WTC11 (cell line): ENCODE measurements at regions of chr6 and their contacts with region 1.

Region 1: DNA sequence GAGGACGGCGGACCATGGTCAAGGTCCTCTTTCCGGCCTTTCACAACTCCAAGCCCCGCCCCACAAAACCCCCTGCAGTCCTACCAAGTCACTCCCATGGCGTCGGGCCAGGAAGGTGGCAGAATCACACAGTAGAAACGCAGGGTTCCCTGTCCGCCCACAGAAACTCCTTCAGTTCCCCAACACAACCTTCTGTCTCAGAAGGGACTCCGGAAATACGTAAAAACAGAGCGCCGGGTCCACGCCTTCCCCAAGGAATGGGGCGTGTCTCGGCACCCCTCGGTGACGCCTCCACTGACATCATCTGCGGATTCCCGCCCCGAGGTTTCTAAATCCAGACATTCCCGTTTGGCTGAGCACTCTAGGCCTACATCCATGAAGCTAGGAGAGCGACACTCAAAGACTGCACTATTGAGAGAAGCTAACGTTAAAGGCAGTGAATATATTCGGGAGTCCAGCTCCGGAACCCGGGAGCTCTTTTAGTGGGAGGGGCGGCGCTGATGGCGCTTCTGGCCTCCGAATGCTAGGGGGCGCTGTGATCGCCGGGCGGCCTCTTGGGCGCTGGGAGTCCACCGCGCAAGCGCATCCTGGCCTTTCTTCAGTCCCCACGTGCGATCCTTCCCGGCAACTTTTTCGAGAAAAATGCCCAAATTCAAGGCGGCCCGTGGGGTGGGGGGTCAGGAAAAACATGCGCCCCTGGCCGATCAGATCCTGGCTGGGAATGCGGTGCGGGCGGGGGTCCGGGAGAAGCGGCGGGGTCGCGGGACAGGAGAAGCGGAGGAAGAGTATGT is at the starts of genes BYSL and MED20:
- DNase-seq: peak; percentile 92
- ATAC-seq: peak; percentile 83
- H3K4me3 Mint-ChIP-seq: peak within 1 kb of the TSS; percentile 98
- H3K27ac Mint-ChIP-seq: peak within 1 kb of the TSS; percentile 100
- H3K4me1 Mint-ChIP-seq: peaks cover 23% of the 10 kb centered on the region
- H3K27me3 Mint-ChIP-seq: no peaks in the 10 kb centered on the region
- CTCF ChIP-seq: peak; percentile 91
- total RNA-seq, gene BYSL: 40.3 to 50.8 TPM (median 43.8 TPM) in 3 replicates
- total RNA-seq, gene MED20: 37.5 to 42.4 TPM (median 38.9 TPM) in 3 replicates

Region 2: DNA sequence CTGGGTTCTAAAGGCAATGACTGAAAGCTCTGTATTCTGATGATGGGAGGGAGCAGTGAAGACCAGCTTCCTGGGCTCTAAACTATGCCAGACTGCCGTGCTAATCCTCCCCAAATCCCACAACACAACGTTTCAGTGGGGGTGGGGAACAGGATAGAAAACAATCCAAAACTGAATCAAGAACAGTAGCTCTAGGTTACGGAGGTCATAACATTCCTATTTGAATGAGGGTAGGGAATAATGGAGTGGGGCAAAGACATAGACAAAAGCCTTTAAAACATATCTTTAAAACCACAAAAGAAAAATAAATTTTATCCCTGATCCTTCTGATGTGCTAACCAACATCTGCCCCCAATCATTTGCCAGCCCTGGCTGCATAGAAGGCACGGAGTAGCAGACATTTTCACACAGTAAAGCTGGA is 33.8 kb before region 1 on chr6:
- CTCF ChIA-PET with region 1: interaction called, 12 read pairs
- POLR2A ChIA-PET with region 1: interaction called, 7 read pairs
- DNase-seq: no peak
- ATAC-seq: peak; percentile 64
- H3K4me3 Mint-ChIP-seq: no peak overlapping the region
- H3K27ac Mint-ChIP-seq: peak overlapping the region; percentile 62
- H3K4me1 Mint-ChIP-seq: peaks cover 17% of the 10 kb centered on the region
- H3K27me3 Mint-ChIP-seq: no peaks in the 10 kb centered on the region
- CTCF ChIP-seq: no peak

Region 3: DNA sequence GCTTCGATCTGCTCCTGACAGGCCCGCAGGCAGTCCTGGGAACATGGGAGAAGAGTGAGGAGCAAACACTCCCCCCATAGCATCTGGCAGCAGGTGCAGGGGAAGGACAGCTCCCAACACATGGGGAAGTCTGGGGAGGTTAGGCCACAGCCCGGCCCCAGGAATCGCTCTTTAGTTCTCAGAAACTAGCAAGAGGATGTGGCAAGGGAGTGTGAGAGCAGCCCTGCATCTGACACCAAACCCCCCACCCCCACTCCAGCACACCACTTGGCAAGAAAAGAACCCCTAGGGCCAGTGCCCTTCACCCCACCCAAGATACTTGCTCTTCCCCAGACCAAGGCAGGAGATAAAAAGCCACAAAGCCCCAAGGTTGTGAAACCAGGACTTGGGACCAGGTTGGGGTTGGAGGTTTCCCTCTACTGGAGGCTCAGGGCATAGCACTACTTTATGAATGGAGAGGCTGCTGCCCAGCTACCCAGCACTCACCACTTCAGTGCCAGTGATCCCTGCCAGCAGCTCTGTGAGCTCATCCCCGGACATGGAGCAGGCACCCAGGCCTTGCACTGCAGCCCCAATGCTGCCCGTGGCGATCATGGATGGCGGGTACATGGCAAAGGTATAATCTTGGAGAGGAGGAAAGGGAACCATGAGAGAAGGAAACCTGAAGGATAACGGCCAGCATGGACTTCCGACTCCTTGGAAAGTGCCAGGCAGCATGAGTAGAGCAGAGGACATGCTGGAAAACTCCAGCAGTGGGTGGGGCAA is 15.1 kb after region 1 on chr6:
- CTCF ChIA-PET with region 1: interaction called, 112 read pairs
- POLR2A ChIA-PET with region 1: interaction called, 8 read pairs
- DNase-seq: peak; percentile 61
- ATAC-seq: peak; percentile 49
- H3K4me3 Mint-ChIP-seq: no peak overlapping the region
- H3K27ac Mint-ChIP-seq: 0 out of 2 replicates have a peak overlapping the region, but pooled peaks have one; percentile 78
- H3K4me1 Mint-ChIP-seq: peaks cover 26% of the 10 kb centered on the region
- H3K27me3 Mint-ChIP-seq: no peaks in the 10 kb centered on the region
- CTCF ChIP-seq: peak; percentile 77

Region 4: DNA sequence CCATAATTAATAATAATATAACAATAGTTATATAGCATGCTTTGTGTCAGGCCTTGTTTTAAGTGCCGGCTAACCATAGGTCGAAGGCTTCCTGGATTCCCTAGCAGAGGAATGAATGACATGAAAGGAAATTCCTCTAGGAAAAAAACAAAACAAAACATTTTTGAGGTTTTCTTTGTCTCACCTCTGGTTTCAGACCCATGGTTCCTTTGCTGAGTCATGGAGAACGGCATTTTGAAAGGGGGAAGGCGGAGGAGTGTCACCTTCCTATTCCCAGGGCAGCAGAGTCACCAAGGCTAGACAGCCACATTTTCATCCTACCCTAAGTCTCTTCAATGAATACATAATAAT is 45.8 kb after region 1 on chr6:
- CTCF ChIA-PET with region 1: interaction called, 14 read pairs
- POLR2A ChIA-PET with region 1: interaction called, 5 read pairs
- DNase-seq: peak; percentile 17
- ATAC-seq: no peak
- H3K4me3 Mint-ChIP-seq: no peak overlapping the region
- H3K27ac Mint-ChIP-seq: peak overlapping the region; percentile 80
- H3K4me1 Mint-ChIP-seq: peaks cover 49% of the 10 kb centered on the region
- H3K27me3 Mint-ChIP-seq: no peaks in the 10 kb centered on the region
- CTCF ChIP-seq: no peak

Region 5: DNA sequence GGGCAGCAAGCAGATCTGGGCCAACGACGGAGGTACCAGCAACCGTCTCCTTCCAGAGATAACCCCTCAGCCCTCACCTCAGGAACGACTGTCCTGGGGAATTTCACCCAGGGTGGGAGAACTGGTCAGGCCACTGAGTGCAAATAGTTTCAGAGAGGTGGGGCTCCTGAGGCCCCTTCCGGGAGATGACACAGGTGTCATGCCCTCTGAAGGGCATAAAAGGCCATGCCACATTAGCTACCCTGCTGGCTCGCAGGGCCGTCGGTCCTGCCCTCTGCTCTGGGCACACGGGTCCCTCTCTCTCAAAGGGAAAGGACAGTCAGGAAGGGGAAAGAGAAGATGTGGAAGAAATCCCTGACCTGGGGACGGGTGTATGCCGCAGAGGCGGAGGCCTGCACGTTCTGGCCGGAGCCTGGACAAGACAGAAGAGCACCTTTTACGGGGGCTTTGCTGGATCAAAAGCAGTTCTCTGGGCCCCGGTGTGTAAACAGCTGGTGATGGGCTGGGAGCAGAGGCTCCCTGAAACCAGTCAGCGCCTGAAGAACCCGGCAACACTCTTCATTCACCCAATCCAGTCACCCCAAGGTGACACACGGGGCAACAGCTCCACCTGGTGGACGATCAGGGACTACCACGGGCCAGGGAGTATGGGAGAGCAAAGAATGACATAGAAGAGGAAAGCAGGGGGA is 122.8 kb after region 1 on chr6:
- CTCF ChIA-PET with region 1: interaction called, 32 read pairs
- POLR2A ChIA-PET with region 1: interaction called, 3 read pairs
- DNase-seq: peak; percentile 96
- ATAC-seq: peak; percentile 78
- H3K4me3 Mint-ChIP-seq: peak overlapping the region; percentile 38; the same call in 1 of the 2 replicates
- H3K27ac Mint-ChIP-seq: no peak overlapping the region
- H3K4me1 Mint-ChIP-seq: peaks cover 42% of the 10 kb centered on the region
- H3K27me3 Mint-ChIP-seq: peaks cover 82% of the 10 kb centered on the region
- CTCF ChIP-seq: peak; percentile 97

Region 6: DNA sequence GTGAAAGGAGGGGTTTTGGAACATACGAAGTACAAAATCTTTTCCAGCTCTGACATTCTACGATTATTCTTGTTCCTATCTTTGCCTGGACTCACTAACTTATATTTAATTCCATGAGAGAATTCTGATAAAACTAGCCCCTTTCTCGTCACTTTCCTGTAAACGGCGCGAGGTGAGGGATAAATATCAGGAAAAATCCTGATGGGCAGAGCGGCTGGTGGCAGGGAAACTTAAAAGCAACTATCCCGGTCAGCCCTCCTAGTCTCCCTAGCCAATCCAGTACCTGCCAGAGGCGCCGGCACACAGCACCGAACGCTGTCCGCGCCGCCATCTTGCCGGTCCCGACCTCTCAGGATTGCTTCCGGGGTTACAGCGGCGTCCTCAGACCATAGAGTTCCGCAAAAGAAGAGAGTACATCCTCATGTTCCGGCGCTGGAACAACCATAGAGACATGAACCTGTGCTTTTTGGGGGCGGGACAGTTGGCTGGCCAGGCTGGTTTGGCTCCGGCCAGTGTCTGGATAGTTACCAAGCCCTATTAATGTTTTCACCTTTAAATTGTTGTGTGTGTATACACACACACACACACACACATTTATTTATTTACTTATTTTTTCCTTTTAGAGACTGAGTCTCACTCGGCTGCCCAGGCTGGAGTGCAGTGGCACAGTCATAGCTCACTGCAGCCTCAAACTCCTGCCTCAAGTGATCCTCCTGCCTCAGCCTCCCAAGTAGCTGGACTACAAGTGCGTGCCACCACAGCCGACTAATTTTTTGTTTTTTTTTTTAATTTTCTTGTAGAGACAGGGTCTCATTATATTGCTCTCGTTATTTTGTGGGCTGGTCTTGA is 296.6 kb after region 1 on chr6 and contains the start of gene MRPS10:
- CTCF ChIA-PET with region 1: interaction called, 10 read pairs
- POLR2A ChIA-PET with region 1: no interaction called
- DNase-seq: peak; percentile 95
- ATAC-seq: peak; percentile 99
- H3K4me3 Mint-ChIP-seq: peak within 1 kb of the TSS; percentile 100
- H3K27ac Mint-ChIP-seq: peak within 1 kb of the TSS; percentile 100
- H3K4me1 Mint-ChIP-seq: peaks cover 14% of the 10 kb centered on the region
- H3K27me3 Mint-ChIP-seq: no peaks in the 10 kb centered on the region
- CTCF ChIP-seq: no peak
- total RNA-seq, gene MRPS10: 30.7 to 32.9 TPM (median 31.3 TPM) in 3 replicates